ENCODE measurements at regions of chrX and their contacts with region 1.

Region 1: GRCh38 chrX:22748093-22748999 is 251.4 kb upstream of the DDX53 start:
- DNase-seq: no peak
- ATAC-seq: peak; percentile 81

Region 2: DNA sequence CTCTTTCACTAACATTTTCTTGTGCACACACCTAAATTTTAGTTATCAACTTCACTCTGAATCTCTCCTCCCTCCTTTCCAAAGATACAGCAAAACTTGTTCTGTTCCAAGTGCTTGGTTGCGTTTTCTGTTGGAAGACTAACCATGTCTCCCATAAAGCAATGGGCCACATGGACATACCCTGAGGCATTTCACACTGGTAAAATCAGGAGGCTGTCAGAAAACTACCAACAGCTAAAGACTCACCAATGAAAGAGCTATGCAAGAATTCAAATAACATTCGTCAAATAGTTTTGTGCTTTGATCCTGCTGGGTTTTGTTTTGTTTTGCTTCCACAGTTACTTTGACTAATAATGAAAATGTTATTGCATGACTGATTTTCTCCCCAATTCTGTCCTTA is 670.2 kb before region 1 on chrX:
- intact Hi-C with region 1: loop called (anchors 5 kb)
- DNase-seq: no peak
- ATAC-seq: no peak

Region 3: GRCh38 chrX:22855693-22856092 is 107.3 kb after region 1 on chrX:
- intact Hi-C with region 1: no loop called
- DNase-seq: no peak
- ATAC-seq: no peak